ENCODE measurements at regions of chr10 and their contacts with region 1.

Region 1: DNA sequence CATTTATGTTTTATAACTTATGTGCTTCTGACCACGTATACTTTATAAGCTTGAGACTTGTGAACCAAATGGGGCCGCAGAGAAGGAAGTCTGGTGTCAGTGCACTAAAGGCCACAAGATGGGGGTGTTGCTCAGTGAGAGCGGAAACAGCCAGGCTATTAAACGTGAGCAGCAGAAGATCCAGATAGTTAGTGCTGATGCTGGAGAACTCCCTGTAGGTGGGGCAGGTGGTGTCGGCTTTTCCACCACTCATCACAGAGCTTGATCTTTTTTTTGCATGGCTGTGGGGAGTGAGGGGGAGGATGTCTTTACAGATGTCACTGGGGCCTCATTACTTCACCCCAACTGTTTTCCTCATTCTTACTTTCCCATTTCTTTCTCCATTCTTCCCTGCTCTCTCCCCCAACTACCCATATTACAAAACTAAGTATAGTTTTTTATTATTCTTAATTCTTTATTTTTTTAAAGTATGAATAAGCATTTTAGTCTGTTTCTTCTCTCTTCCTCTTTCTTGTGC is 34.7 kb downstream of the ACADSB start:
- DNase-seq: peak in 1 of 2 experiments; percentile 18
- H3K4me3 ChIP-seq: no peak overlapping the region
- H3K27ac ChIP-seq: no peak overlapping the region
- H3K4me1 ChIP-seq: no peaks in the 10 kb centered on the region
- H3K27me3 ChIP-seq: no peaks in the 10 kb centered on the region
- CTCF ChIP-seq: peak; percentile 84

Region 2: GRCh38 chr10:122953827-122954730 is 89.4 kb before region 1 on chr10 and contains the start of gene C10orf88:
- CTCF ChIA-PET with region 1: no interaction called
- POLR2A ChIA-PET with region 1: no interaction called
- intact Hi-C with region 1: no loop called
- DNase-seq: peak; percentile 86
- H3K4me3 ChIP-seq: peak within 1 kb of the TSS; percentile 71
- H3K27ac ChIP-seq: no peak within 1 kb of the TSS
- H3K4me1 ChIP-seq: no peaks in the 10 kb centered on the region
- H3K27me3 ChIP-seq: no peaks in the 10 kb centered on the region
- CTCF ChIP-seq: no peak
- total RNA-seq, gene C10orf88: 2.9 and 7.6 TPM in 2 replicates

Region 3: GRCh38 chr10:123380497-123381085 is 337.1 kb after region 1 on chr10:
- CTCF ChIA-PET with region 1: no interaction called
- POLR2A ChIA-PET with region 1: no interaction called
- intact Hi-C with region 1: loop called (anchors 5 kb)
- DNase-seq: no peak
- H3K4me3 ChIP-seq: no peak overlapping the region
- H3K27ac ChIP-seq: no peak overlapping the region
- H3K4me1 ChIP-seq: peaks cover 12% of the 10 kb centered on the region; the same call in 1 of the 2 replicates
- H3K27me3 ChIP-seq: no peaks in the 10 kb centered on the region
- CTCF ChIP-seq: peak; percentile 46; the same call in 1 of the 2 replicates

Measured in PC-9 (cell line).